Activated T-helper 1 cell treated with anti-CD3 and anti-CD28 coated beads, Interleukin-12 subunit alpha, Interleukin-12 subunit beta, Interleukin-2, Interleukin-4 antibody, amounts not matched to agents 30 ng/mL and 10 ng/mL and 1 ng/mL, durations not matched to agents 14 hours and 24 hours and 36 hours (primary cell): ENCODE measurements at regions of chr4 and their contacts with region 1.

Region 1: DNA sequence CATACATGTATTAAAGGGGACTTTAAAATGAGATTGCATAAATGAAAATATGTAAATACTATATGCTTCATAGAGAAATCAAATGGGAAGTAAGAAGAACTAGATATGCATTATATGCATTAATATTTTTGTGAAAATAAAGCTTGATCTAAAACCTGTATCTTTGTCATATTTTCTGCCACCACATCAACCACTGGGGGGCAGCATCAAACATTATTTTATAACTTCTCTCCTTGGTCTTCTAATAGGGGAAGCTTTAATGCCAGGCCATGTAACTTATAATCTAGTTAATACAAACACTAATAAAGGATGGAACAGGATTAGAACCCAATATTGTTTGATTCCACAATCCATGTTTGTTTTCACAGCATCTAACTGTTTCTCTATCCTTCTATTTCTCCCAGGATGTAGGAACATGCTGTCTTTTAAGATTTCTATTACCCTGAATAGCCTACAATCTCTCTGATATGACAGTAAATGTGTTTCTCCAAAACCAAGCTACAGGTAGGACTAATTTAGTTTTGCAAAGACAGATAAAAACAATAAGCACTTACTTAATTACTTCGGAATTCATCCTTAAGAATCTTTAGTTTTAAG is 10.0 kb downstream of the QRFPR start:
- DNase-seq: no peak
- H3K4me3 Mint-ChIP-seq: no peak overlapping the region
- H3K27ac Mint-ChIP-seq: no peak overlapping the region
- H3K4me1 Mint-ChIP-seq: no peaks in the 10 kb centered on the region
- H3K27me3 Mint-ChIP-seq: peaks cover 10% of the 10 kb centered on the region

Region 2: GRCh38 chr4:121360495-121360894 is 10.3 kb before region 1 on chr4:
- intact Hi-C with region 1: loop called (anchors 1 kb)
- DNase-seq: no peak
- H3K4me3 Mint-ChIP-seq: no peak overlapping the region
- H3K27ac Mint-ChIP-seq: no peak overlapping the region
- H3K4me1 Mint-ChIP-seq: no peaks in the 10 kb centered on the region
- H3K27me3 Mint-ChIP-seq: peaks cover 5% of the 10 kb centered on the region

Region 3: GRCh38 chr4:121656269-121656641 is 285.4 kb after region 1 on chr4:
- intact Hi-C with region 1: loop called (anchors 1 kb)
- DNase-seq: no peak
- H3K4me3 Mint-ChIP-seq: no peak overlapping the region
- H3K27ac Mint-ChIP-seq: no peak overlapping the region
- H3K4me1 Mint-ChIP-seq: no peaks in the 10 kb centered on the region
- H3K27me3 Mint-ChIP-seq: peaks cover 13% of the 10 kb centered on the region

Region 4: GRCh38 chr4:121736735-121737351 is 366.0 kb after region 1 on chr4:
- intact Hi-C with region 1: loop called (anchors 1 kb)
- DNase-seq: no peak
- H3K4me3 Mint-ChIP-seq: no peak overlapping the region
- H3K27ac Mint-ChIP-seq: no peak overlapping the region
- H3K4me1 Mint-ChIP-seq: no peaks in the 10 kb centered on the region
- H3K27me3 Mint-ChIP-seq: peaks cover 21% of the 10 kb centered on the region